ENCODE measurements at regions of chrX and their contacts with region 1.

Region 1: DNA sequence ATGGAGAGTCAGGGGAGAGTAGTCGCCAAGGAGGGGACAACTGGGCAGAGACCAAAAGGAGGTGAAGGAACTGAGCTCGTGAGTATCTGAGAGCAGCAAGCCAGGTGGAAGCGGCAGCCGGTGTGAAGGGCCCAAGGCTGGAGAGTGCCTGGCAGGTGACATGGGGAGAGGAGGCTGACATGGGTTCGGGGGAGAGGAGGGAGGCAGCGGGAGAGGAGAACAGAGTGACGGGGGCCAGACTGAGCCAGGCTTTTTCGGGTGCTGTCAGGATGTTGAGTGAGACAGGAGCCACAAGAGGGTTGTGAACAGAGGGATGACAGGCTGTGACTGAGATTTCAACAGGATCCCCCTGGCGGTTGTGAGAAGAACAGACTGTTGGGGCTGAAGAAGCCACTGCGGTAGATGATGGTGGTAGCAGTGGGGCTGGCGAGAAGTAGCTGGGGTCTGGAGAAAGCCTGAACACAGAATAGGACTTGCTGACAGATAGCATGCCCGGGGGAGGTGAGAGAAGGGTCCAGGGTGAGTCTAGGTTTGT is 5.7 kb downstream of the ELK1 start:
- DNase-seq: no peak
- H3K4me3 Mint-ChIP-seq: no peak overlapping the region
- H3K27ac Mint-ChIP-seq: peak overlapping the region; percentile 63
- H3K4me1 Mint-ChIP-seq: peaks cover 35% of the 10 kb centered on the region
- H3K27me3 Mint-ChIP-seq: no peaks in the 10 kb centered on the region

Region 2: GRCh38 chrX:47482512-47483309 is 161.9 kb before region 1 on chrX and contains the start of gene ZNF41:
- intact Hi-C with region 1: loop called (anchors 10 kb)
- DNase-seq: peak; percentile 63
- H3K4me3 Mint-ChIP-seq: peak within 1 kb of the TSS; percentile 89
- H3K27ac Mint-ChIP-seq: peak within 1 kb of the TSS; percentile 90
- H3K4me1 Mint-ChIP-seq: peaks cover 25% of the 10 kb centered on the region
- H3K27me3 Mint-ChIP-seq: no peaks in the 10 kb centered on the region
- total RNA-seq, gene ZNF41: 8.7 and 9.7 TPM in 2 replicates

Region 3: GRCh38 chrX:47497273-47497672 is 147.4 kb before region 1 on chrX:
- intact Hi-C with region 1: no loop called
- DNase-seq: no peak
- H3K4me3 Mint-ChIP-seq: no peak overlapping the region
- H3K27ac Mint-ChIP-seq: no peak overlapping the region
- H3K4me1 Mint-ChIP-seq: no peaks in the 10 kb centered on the region
- H3K27me3 Mint-ChIP-seq: no peaks in the 10 kb centered on the region

Region 4: DNA sequence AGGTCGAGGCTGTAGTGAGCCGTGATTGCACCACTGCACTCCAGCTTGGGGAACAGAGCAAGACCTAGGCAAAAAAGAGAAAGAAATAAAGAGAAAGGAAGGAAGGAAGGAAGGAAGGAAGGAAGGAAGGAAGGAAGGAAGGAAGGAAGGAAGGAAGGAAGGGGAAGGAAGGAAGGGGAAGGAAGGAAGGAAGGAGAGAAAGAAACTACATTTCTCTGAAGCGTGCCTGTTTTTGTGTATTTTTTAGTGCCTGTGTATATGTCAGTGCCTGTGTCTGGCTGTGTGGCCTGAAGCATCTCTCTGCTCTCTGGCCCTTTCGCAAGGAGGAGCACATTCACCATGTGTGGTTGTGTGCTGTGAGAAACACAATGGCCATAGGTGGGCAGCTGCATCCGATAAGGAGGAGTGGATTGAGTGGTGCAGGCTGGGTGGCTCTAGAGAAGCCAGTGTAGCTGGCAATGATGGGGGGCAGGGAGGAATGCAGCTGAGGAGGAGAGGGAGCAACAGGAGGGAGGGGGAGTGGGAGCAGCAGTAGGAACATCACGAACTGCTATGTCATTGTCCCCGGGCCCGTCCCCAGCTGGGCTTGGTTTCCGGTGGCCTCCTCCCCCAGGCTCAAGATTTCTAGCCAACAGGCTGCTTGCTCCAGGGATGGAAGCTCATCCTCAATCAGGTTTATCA is 36.4 kb before region 1 on chrX:
- intact Hi-C with region 1: no loop called
- DNase-seq: no peak
- H3K4me3 Mint-ChIP-seq: no peak overlapping the region
- H3K27ac Mint-ChIP-seq: peak overlapping the region; percentile 49
- H3K4me1 Mint-ChIP-seq: peaks cover 2% of the 10 kb centered on the region
- H3K27me3 Mint-ChIP-seq: no peaks in the 10 kb centered on the region

Measured in activated T-helper 2 cell treated with anti-CD3 and anti-CD28 coated beads, Interferon-gamma antibody, Interleukin-2, Interleukin-4, amounts not matched to agents 10 μg/mL and 5 μg/mL and 100 μg/mL, durations not matched to agents 14 hours and 24 hours and 36 hours (primary cell).